ENCODE measurements at regions of chr10 and their contacts with region 1.

Region 1: GRCh38 chr10:115909959-115910731 is 362.9 kb downstream of the GFRA1 start:
- DNase-seq: no peak

Region 2: DNA sequence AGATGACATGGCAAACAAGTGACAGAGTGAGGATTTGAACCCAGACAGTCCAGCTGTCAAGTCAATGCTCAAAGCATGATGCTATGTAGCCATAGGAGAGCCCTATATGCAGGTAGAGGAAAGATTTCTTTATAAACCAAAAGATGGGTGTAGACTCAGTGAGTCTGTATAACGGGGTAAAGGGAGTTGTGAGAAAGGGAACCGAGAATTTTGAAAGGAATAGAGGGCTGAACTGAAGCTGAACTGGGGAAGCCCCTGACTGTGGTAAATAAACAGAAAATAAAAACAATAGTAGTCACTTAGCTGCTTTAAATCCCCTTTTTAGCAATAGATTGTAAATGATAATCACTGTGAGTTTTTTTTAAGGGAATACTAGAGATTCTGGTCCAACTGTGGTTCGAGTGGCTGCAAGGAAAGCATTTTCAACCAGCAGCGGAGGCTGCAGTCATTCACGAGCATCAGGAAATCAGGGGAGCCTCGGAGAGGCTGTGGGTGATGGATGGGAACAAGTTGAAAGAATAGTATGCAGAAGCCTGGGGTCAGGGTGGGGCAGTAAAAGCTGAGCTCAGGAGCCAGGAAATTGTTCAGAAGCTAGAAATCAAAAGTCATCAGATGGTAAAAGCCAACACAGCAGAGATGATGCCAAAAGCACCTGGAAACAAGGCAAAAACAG is 30.6 kb before region 1 on chr10:
- intact Hi-C with region 1: loop called in 1 of 2 experiments (anchors 1 kb)
- DNase-seq: no peak

Measured in posterior vena cava (tissue), 2 donors.